Adrenal gland (tissue), 19 donors: ENCODE measurements at regions of chr2 and their contacts with region 1.

Region 1: DNA sequence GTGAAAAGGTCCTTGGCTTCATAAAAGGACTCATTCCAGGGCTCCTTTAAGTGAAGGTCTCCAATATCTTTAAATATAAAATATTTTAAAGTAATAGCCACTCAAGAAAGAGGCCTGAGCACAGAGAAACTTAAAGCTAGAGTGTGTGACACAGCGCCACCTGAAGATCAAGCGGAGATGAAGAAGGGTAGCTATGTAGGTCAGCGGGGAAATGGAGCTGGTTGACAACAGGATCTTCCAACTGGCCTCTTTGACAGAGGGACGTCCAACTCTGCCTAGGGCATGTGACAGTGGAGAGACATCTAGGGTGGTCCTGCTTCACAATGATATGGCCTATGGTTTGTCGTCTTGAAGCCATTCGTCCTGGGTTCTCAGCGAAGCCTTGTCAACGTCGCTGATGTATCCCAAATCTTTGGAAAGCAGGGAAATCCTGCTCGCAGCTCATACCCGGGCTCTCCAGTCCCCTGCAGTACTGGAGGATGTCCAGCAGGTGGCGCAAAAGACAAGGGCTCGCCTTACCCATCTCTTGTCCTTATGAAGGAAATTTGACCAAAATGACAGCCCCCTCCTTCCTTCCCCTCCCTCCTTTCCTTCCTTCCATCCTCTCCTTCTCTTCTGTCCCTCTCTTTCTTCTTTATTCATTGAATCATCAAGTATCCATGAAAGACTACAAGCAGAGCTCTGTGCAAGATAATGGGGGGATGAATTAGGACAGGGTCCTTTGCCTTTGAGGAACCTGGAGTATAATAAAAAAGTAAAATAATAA is 59.6 kb downstream of the LONRF2 start:
- DNase-seq: peak; percentile 67 to 93 (median 77)
- H3K4me3 ChIP-seq: no peak overlapping the region
- H3K27ac ChIP-seq: peak overlapping the region in 1 of 5 donors; percentile 22
- H3K4me1 ChIP-seq: peaks cover 0 to 10% of the 10 kb centered on the region in 2 donors
- H3K27me3 ChIP-seq: no peaks in the 10 kb centered on the region
- CTCF ChIP-seq: peak; percentile 93 to 99 (median 96)
- POLR2A ChIP-seq: peak in 1 of 2 donors; percentile 9

Region 2: DNA sequence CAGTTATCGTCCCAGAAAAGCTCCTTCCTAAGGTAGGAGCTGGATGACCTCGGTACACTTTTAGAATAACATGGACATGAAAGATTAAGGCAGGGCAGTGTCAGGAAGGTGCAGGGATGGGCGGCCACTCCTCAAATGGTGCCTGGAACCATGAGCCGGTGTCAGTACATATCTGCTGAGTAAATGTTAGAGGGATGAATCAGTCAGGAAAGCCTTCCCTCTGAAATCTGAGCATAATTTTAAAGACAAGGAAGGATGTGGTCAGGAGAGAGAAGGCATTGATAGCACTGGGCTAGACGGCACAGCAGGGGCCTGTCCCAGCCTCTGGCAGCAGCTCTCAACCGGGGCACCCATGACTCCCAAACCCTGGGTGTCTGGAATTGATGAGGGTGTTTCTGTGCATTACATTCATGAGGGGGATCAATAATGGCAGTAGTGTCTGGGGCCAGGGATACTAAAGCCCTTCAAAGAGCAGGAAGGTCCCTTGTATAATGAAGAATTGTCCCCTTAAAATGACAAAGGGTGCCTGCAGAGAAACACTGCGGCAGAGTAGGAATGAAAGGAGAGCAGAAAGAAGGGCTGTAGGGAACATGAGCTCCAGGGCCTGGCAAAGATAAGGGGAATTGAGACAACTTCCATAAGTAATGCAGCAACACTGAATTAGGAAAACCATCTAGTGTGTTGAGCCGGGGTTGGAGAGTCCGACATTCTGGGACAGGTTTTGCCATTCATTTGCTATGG is 610.6 kb before region 1 on chr2:
- intact Hi-C with region 1: no loop called
- DNase-seq: no peak
- H3K4me3 ChIP-seq: no peak overlapping the region
- H3K27ac ChIP-seq: no peak overlapping the region
- H3K4me1 ChIP-seq: peaks cover 3 to 10% of the 10 kb centered on the region in 2 donors
- H3K27me3 ChIP-seq: no peaks in the 10 kb centered on the region
- CTCF ChIP-seq: no peak
- POLR2A ChIP-seq: no peak

Region 3: DNA sequence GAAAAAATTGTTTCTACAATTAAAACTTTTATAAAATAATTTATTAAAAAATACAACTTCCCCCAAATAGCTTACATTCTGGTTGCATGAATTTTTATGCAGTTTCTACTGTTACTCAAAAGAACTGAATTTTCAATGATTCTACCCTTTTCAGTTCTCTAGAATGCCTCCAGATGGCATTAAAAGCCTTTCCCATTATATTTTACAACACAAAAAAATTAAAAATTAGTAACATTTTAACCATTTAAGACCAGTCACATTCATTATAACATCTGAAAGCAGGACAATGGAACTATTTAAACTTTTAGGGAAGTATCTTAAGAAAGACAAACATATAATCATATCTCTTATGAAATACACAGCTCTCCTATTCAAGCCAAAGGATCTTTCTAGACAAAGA is 536.9 kb before region 1 on chr2:
- intact Hi-C with region 1: loop called in 1 of 2 experiments (anchors 10 kb)
- DNase-seq: no peak
- H3K4me3 ChIP-seq: no peak overlapping the region
- H3K27ac ChIP-seq: no peak overlapping the region
- H3K4me1 ChIP-seq: peaks cover 0 to 5% of the 10 kb centered on the region in 2 donors
- H3K27me3 ChIP-seq: no peaks in the 10 kb centered on the region
- CTCF ChIP-seq: peak in 5 of 6 experiments; percentile 8 to 49 (median 41)
- POLR2A ChIP-seq: no peak

Region 4: GRCh38 chr2:100381240-100381639 is 118.5 kb after region 1 on chr2:
- intact Hi-C with region 1: loop called (anchors 2 kb)
- DNase-seq: peak; percentile 81 to 96 (median 87)
- H3K4me3 ChIP-seq: no peak overlapping the region
- H3K27ac ChIP-seq: no peak overlapping the region
- H3K4me1 ChIP-seq: peaks cover 0 to 11% of the 10 kb centered on the region in 2 donors
- H3K27me3 ChIP-seq: no peaks in the 10 kb centered on the region
- CTCF ChIP-seq: peak; percentile 92 to 96 (median 94)
- POLR2A ChIP-seq: no peak

Region 5: DNA sequence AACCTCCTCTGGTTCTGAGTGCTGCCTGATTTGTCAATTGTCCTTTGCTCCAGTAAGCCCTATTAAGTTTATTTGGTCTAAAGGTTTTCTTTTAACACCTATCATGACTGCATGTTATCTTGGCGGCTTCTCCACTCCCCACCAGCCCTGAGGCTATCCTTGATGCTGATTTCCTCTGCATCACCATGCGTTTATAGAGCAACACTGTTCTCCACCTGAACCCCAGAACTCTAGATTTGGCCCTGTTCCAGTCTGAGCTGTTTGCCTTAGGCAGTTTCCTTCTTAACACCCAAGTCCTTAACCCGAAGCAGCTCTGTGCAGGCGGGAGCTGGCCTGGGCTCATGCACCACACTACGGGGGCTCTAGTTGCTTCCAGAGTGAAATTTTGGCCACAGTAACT is 459.0 kb after region 1 on chr2:
- intact Hi-C with region 1: no loop called
- DNase-seq: no peak
- H3K4me3 ChIP-seq: no peak overlapping the region
- H3K27ac ChIP-seq: no peak overlapping the region
- H3K4me1 ChIP-seq: no peaks in the 10 kb centered on the region
- H3K27me3 ChIP-seq: no peaks in the 10 kb centered on the region
- CTCF ChIP-seq: no peak
- POLR2A ChIP-seq: no peak

Region 6: GRCh38 chr2:100924520-100925451 is 662.0 kb after region 1 on chr2:
- intact Hi-C with region 1: no loop called
- DNase-seq: peak; percentile 66 to 91 (median 83)
- H3K4me3 ChIP-seq: peak overlapping the region in 2 of 4 donors; percentile 13 to 37
- H3K27ac ChIP-seq: peak overlapping the region; percentile 60 to 97 (median 78)
- H3K4me1 ChIP-seq: peaks cover 17 to 18% of the 10 kb centered on the region in 2 donors
- H3K27me3 ChIP-seq: no peaks in the 10 kb centered on the region
- CTCF ChIP-seq: no peak
- POLR2A ChIP-seq: peak in 1 of 2 donors; percentile 86

Region 7: DNA sequence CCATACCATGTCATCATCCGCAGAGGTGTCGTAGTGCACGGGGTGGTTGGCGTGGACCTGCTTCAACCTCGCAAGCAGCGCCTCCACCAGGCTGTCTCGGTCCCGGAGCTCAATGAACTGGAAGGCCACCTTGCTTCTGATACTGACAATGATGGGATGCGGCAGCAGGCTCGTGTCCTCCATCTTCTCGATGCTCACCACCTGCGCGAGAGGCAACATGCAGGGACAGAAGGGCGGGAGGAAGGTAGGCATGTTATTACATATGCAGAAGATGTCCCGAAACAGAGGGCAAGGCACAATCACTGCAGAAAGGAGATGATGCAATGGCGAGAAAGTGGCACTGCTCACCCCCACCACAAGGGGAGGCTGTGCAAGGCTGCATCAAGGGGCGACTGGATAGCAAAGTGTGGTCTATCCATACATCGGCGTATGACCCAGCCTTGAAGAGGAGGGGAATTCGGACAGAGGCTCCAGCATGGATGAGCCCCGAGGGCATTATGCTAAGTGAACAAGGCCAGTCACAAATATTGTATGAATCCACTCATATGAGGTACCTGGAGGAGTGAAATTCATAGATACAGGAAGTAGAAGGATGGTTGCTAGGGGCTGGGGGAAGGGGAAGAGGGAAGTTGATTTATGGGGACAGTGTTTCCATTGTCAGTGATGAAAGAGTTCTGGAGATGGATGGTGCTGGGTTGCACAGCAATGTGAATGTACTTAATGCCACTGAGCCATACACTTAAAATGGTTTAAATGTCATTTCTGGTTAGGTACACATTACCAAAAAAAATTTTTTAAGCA is 775.9 kb after region 1 on chr2:
- intact Hi-C with region 1: no loop called
- DNase-seq: no peak
- H3K4me3 ChIP-seq: no peak overlapping the region
- H3K27ac ChIP-seq: no peak overlapping the region
- H3K4me1 ChIP-seq: no peaks in the 10 kb centered on the region
- H3K27me3 ChIP-seq: no peaks in the 10 kb centered on the region
- CTCF ChIP-seq: peak in 5 of 6 experiments; percentile 9 to 47 (median 37)
- POLR2A ChIP-seq: no peak